Mammary epithelial cell (primary cell): ENCODE measurements at regions of chr1 and their contacts with region 1.

Region 1: DNA sequence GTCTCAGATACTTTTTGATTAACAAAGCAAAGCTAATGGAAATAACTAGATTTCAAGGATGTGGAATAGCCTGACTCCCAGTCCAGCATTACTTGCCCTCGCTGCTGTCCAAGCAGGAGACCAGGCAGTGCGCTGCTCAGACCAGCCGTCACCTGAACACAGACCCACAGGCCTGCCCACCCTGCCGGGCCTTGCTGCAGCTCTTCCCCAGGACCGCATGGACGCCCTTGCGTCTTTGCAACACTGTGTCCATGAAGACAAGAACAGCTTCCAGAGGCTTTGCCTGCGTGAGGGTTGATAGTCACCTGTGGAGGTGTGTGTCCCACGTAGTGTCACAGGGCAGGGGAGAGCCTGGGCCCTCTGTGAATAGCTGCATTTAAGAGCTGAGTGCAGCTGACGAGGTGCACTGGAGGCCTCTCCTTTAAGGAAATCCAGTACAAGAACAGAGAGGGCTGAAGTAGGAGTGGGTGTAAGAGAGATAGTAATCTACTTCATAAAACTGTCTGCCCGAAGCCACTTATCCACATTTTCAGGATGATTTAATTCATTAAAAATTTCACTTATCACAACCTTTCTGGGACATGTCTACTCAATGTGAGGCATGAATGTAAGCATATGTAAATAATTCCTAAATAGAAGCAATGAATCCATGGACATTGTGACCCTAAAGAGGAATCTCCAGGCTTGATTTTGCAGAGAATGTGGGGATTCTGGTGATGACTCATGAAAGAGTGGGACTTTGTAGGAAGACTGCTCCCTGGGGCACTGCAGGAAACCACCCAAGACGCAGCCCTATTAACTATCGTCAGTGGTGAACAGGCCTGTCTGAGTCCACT is 176.2 kb upstream of the RAB4A start:
- DNase-seq: peak; percentile 53
- H3K4me3 ChIP-seq: no peak overlapping the region
- H3K27ac ChIP-seq: no peak overlapping the region
- H3K4me1 ChIP-seq: peaks cover 23% of the 10 kb centered on the region
- H3K27me3 ChIP-seq: no peaks in the 10 kb centered on the region
- CTCF ChIP-seq: no peak

Region 2: DNA sequence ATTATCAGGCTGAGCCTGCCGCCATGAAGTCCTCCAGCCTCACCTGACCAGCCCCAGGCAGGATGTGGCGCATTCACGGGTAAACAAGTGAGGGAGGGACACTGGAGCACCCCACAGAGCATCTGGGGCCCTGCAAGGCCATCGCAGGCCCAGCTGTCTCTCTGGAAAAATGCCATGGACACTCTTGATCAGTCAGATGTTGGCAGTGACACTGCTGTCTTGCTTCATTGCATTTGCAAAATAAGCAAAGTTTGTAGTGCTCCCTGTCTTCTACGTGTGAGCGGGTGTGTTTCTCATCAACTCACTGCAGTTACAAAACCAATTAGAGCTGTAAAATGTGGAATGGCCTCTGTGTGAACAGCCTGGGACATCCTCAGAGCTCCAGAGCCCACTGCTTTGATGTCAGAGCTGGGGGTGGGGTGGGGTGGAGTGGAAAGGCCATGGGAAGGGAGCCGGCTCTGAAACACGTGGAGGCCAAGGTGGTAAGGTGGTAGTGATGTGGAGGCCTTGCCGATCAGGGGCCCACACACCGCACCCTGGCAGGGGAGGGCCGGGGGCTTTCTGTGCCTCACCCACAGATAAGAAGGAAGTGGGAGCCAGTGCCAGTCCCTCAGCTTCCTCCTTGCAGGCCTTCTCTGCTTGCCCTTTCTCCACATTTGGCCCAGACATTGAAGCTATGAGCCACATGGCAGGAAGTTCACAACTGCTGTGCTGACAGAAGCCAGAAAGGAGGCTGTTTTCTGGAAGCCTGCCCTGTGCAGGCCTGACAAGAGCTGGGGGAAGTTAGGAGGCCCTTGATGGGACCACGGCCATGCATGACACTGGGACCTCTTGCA is 104.5 kb before region 1 on chr1:
- CTCF ChIA-PET with region 1: no interaction called
- dilution Hi-C with region 1: loop called (anchors 5 kb)
- in situ Hi-C with region 1: no loop called
- intact Hi-C with region 1: no loop called
- DNase-seq: no peak
- H3K4me3 ChIP-seq: no peak overlapping the region
- H3K27ac ChIP-seq: no peak overlapping the region
- H3K4me1 ChIP-seq: no peaks in the 10 kb centered on the region
- H3K27me3 ChIP-seq: peaks cover 2% of the 10 kb centered on the region
- CTCF ChIP-seq: no peak

Region 3: GRCh38 chr1:229199850-229200243 is 105.2 kb after region 1 on chr1:
- CTCF ChIA-PET with region 1: no interaction called
- dilution Hi-C with region 1: no loop called
- in situ Hi-C with region 1: no loop called
- intact Hi-C with region 1: no loop called
- DNase-seq: no peak
- H3K4me3 ChIP-seq: no peak overlapping the region
- H3K27ac ChIP-seq: no peak overlapping the region
- H3K4me1 ChIP-seq: peaks cover 3% of the 10 kb centered on the region
- H3K27me3 ChIP-seq: peaks cover 3% of the 10 kb centered on the region
- CTCF ChIP-seq: no peak

Region 4: GRCh38 chr1:229310833-229311232 is 216.1 kb after region 1 on chr1:
- CTCF ChIA-PET with region 1: no interaction called
- dilution Hi-C with region 1: no loop called
- in situ Hi-C with region 1: no loop called
- intact Hi-C with region 1: no loop called
- DNase-seq: no peak
- H3K4me3 ChIP-seq: no peak overlapping the region
- H3K27ac ChIP-seq: no peak overlapping the region
- H3K4me1 ChIP-seq: no peaks in the 10 kb centered on the region
- H3K27me3 ChIP-seq: no peaks in the 10 kb centered on the region
- CTCF ChIP-seq: no peak